ENCODE measurements at regions of chr14 and their contacts with region 1.

Region 1: DNA sequence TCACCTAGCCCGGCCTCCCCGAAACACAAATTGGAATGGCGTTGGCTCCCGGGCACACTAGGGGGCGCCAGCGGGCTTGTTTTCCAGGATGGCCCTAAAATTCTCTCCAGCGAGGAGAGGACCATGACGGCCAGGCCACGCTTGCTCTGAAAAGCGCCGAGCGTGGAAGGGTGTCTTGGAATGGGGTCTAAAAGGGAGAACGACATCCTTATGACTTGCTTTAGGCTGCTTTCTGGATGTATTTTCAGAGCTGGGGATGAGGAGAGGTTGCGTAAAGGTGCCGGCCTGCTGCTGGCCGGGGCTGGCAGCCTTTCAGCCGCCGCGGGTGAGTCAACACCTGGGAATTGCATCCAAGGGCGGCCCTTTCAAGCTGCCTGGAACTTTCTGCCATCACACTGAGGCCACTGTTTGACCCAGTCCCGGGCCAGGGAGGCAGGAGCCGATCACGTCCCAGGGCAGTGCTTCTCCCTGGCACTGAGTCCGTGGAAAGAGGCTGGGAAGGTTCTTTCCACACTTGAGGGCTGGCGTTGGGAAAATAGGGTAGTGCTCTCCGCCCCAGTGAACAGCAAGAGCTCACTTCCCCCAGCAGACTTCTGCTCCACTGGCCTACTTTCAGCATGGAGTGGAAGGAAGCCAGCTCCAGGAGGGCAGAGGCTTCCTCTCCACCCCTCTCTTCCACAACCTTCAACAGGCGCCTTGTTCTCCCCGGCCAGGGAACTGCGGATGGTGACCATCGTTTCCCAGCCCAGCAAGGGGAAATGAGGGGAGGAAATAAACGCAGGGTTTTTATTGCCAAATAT is 216.2 kb downstream of the TTC8 start:
- DNase-seq: peak; percentile 88
- H3K4me3 ChIP-seq: peak overlapping the region in 2 of 3 experiments; percentile 34 to 49
- H3K27ac ChIP-seq: peak overlapping the region; percentile 83
- H3K4me1 ChIP-seq: peaks cover 9% of the 10 kb centered on the region
- H3K27me3 ChIP-seq: peaks cover 0 to 9% of the 10 kb centered on the region in 2 experiments
- CTCF ChIP-seq: peak; percentile 96 to 99
- POLR2A ChIP-seq: no peak

Region 2: DNA sequence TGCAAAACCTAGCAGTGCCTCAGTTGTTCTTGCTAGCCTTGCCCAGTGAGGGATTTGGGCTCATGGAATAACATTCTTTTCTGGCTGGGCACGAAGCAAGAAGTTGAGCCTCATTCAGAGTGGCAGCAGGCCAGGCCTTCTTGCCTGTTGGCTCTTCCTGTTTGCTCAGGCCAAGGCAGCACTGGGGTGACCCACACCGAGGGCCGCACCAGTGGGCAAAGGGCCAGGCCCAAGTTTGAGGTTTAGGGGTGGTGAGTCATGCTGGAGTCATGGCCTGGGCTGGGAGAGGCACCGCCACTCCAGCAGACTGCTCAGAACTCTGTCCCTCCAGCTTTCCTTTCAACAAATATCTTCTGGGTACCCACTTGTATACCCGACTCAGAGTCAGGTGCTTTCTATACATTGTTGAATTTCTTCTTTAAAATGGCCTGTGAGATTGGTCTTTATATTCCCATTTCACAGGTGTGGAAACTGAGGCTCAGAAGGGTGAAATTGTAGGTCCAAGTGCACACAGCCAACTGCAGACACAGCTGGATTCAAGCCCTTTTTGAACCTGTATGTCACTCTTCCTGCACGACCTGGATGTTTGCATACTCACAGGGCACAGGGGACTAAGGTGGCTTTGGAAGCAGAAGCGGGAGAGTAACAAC is 97.0 kb after region 1 on chr14:
- CTCF ChIA-PET with region 1: interaction called, 3 read pairs
- POLR2A ChIA-PET with region 1: no interaction called
- dilution Hi-C with region 1: no loop called
- intact Hi-C with region 1: loop called (anchors 2 kb)
- DNase-seq: peak; percentile 79
- H3K4me3 ChIP-seq: no peak overlapping the region
- H3K27ac ChIP-seq: no peak overlapping the region
- H3K4me1 ChIP-seq: peaks cover 6% of the 10 kb centered on the region
- H3K27me3 ChIP-seq: peaks cover 0 to 3% of the 10 kb centered on the region in 2 experiments
- CTCF ChIP-seq: no peak
- POLR2A ChIP-seq: no peak

Region 3: GRCh38 chr14:89303457-89304435 is 263.1 kb after region 1 on chr14:
- CTCF ChIA-PET with region 1: interaction called, 3 read pairs
- POLR2A ChIA-PET with region 1: no interaction called
- dilution Hi-C with region 1: no loop called
- intact Hi-C with region 1: loop called (anchors 2 kb)
- DNase-seq: peak; percentile 83
- H3K4me3 ChIP-seq: peak overlapping the region in 1 of 3 experiments; percentile 24
- H3K27ac ChIP-seq: peak overlapping the region; percentile 71
- H3K4me1 ChIP-seq: peaks cover 40% of the 10 kb centered on the region
- H3K27me3 ChIP-seq: no peaks in the 10 kb centered on the region
- CTCF ChIP-seq: no peak
- POLR2A ChIP-seq: no peak

Region 4: DNA sequence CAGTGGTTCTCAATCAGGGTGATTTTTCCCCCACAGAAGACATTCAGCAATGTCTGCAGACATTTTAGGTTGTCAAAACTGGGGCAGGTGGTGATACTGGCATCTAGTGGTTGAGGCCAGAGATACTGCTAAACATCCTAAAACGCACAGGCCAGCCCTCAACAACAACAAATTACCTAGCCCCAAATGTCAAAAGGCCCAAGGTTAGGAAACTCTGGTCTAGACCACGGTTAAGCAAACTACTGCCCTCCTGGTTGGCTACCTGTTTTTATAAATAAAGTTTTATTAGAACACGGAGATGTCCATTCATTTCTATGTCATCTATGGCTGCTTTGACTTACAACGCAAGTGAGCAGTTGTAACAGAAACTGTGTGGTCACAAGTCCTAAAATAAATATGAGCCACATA is 727.2 kb after region 1 on chr14:
- CTCF ChIA-PET with region 1: interaction called, 14 read pairs
- POLR2A ChIA-PET with region 1: no interaction called
- dilution Hi-C with region 1: no loop called
- intact Hi-C with region 1: loop called (anchors 1 kb)
- DNase-seq: peak; percentile 44
- H3K4me3 ChIP-seq: no peak overlapping the region
- H3K27ac ChIP-seq: no peak overlapping the region
- H3K4me1 ChIP-seq: peaks cover 17% of the 10 kb centered on the region
- H3K27me3 ChIP-seq: no peaks in the 10 kb centered on the region
- CTCF ChIP-seq: peak; percentile 45 to 65
- POLR2A ChIP-seq: no peak

Region 5: DNA sequence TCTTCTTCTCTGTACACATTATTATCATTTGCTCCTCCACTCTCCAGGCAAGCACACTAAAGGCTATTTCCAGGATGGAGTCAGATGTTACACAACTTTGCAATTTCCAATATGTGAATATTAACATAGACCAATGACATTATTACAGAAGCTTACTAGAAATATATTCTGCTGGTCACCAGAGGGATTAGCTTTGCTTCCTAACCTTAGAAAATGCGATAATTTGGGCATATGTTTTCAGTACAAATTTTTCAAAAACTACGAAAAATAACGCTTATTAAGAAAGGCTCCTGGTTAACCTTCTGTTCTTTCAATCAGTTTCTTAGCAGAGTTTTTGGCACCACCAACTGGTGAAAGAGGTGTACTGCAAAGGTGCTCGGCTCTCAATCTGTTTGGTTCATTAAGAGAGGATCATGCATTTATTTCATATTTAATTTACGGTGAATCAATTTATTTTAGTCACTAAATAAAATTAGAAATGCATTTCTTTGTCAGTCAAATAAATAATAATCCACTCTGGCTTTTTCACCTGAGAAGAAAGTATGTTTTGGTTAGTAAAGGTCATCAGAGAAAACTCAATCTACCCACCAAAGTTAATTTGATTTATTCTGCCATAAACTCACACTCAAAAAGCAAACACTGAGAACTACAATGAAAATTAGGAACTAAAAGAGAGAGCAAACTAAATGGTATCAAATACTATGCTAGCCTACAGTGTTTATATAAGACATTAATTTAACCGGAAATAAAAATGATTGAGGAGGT is 874.6 kb after region 1 on chr14:
- CTCF ChIA-PET with region 1: interaction called, 17 read pairs
- POLR2A ChIA-PET with region 1: no interaction called
- dilution Hi-C with region 1: no loop called
- intact Hi-C with region 1: loop called (anchors 1 kb)
- DNase-seq: peak; percentile 79
- H3K4me3 ChIP-seq: no peak overlapping the region
- H3K27ac ChIP-seq: no peak overlapping the region
- H3K4me1 ChIP-seq: no peaks in the 10 kb centered on the region
- H3K27me3 ChIP-seq: no peaks in the 10 kb centered on the region
- CTCF ChIP-seq: peak; percentile 75
- POLR2A ChIP-seq: no peak

Region 6: GRCh38 chr14:89973234-89973823 is 932.7 kb after region 1 on chr14:
- CTCF ChIA-PET with region 1: interaction called, 14 read pairs
- POLR2A ChIA-PET with region 1: no interaction called
- dilution Hi-C with region 1: no loop called
- intact Hi-C with region 1: no loop called
- DNase-seq: peak; percentile 67
- H3K4me3 ChIP-seq: no peak overlapping the region
- H3K27ac ChIP-seq: no peak overlapping the region
- H3K4me1 ChIP-seq: no peaks in the 10 kb centered on the region
- H3K27me3 ChIP-seq: no peaks in the 10 kb centered on the region
- CTCF ChIP-seq: peak; percentile 79 to 83
- POLR2A ChIP-seq: no peak

Measured in endothelial cell of umbilical vein (primary cell).